ENCODE measurements at regions of chr11 and their contacts with region 1.

Region 1: GRCh38 chr11:123511037-123511870 is 81.2 kb downstream of the GRAMD1B start:
- DNase-seq: peak; percentile 89
- ATAC-seq: peak; percentile 94

Region 2: DNA sequence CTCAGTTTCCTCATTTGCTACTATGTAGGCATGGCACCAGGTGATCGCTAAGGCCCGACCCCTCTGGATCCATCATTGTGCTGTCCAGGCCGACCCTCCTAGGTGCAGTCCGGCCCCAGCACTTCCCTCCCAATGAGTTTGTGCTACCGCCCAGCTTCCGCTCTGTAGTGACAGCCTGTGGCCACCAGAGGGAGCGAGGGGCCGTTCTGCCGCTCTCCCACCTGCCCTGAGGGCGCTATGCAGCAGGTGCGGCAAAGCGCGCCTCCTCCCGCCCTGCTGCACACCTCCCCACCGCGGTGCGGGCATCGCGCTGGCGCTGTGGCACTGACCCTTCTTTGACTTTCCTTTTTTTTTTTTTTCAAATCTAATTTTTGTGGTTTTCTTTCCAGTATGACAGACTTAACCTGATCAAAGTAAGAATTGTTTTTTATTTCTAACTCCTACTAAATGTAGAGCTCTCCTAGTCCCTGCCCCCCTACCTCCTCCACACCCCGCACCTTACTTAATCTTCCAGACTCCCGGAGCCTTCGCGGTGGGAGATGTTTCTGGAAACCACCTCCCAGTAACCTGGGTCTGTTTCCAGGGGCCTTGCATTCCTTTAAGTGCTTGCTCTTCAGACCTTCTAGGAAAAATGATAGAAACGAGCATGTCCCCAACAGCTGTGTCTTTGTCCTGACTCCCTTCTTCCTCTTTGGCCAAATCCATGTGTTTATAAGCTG is 69.5 kb after region 1 on chr11:
- intact Hi-C with region 1: loop called (anchors 5 kb)
- DNase-seq: peak; percentile 73
- ATAC-seq: peak; percentile 63

Region 3: DNA sequence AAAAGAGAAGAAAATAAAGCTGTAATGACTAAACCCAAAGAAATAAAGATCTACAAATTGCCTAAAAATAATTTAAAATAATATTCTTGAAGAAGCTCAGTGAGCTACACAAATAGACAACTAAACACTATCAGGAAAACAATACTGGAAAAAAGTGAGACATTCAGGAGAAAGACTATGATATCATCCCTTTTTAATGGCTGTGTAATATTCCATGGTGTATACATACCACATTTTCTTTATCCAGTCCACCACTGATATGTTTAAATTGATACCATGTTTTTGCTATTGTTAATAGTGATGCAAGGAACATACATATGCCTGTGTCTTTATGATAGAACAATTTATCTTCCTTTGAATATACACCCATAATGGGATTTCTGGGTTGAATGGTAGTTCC is 445.5 kb after region 1 on chr11:
- intact Hi-C with region 1: no loop called
- DNase-seq: no peak
- ATAC-seq: no peak